HEK293 (cell line): ENCODE measurements at regions of chr20 and their contacts with region 1.

Region 1: DNA sequence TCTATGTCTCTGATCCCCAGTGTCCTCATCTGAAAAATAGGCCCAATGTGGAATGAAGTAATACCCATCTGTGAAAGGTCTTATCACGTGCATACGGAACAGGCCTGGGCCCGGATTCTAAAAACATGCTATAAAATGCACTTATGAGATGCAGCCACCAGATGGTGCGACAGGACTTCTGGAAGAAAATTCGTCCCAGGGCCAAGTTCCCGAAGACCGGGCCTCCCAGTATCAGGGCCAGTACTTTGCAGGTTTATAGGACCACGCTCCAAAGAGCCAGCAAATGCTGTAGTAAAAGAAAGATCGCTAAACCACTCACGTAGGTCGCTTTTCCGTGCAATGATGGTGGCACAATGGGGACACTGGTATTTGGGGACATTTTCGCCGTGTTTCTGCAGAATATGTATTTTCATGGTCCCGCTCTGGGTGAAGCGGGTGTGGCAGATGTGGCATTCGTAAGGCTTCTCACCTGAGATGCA is 10.6 kb downstream of the CTCFL start:
- H3K4me3 ChIP-seq: no peak overlapping the region
- H3K27ac ChIP-seq: no peak overlapping the region
- H3K4me1 ChIP-seq: no peaks in the 10 kb centered on the region
- CTCF ChIP-seq: peak; percentile 55

Region 2: DNA sequence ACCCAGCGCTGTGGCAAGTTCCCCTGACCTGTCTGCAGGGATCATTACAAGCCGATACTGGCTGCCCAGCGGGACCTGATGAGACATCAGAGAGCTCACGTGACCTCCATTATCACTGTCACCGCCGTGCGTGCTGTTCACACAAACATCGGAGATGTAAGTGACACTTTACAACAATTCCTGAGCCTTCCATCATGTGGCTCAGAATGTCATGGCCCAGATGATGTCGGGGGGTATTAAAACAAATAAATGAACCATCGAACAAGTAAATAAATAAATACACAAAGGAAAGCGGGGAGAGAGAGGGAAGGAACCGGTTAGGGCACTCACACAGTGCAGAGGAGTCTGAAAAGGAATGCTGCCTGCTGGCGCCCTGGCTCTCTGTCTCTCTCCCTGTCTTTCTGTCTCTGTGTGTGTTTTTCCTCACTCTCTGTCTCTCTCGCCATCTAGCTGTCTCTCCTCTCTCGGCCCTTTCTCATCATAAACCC is 443.0 kb before region 1 on chr20:
- CTCF ChIA-PET with region 1: no interaction called
- POLR2A ChIA-PET with region 1: no interaction called
- H3K4me3 ChIP-seq: no peak overlapping the region; the same call in 1 of the 2 replicates
- H3K27ac ChIP-seq: no peak overlapping the region
- H3K4me1 ChIP-seq: no peaks in the 10 kb centered on the region
- CTCF ChIP-seq: no peak

Region 3: GRCh38 chr20:57498425-57499400 is 15.6 kb before region 1 on chr20:
- CTCF ChIA-PET with region 1: interaction called, 13 read pairs
- POLR2A ChIA-PET with region 1: no interaction called
- H3K4me3 ChIP-seq: no peak overlapping the region
- H3K27ac ChIP-seq: no peak overlapping the region
- H3K4me1 ChIP-seq: peaks cover 3% of the 10 kb centered on the region; the same call in 1 of the 2 replicates
- CTCF ChIP-seq: peak; percentile 65

Region 4: GRCh38 chr20:57573890-57574289 is 59.6 kb after region 1 on chr20:
- CTCF ChIA-PET with region 1: interaction called, 12 read pairs
- POLR2A ChIA-PET with region 1: no interaction called
- H3K4me3 ChIP-seq: no peak overlapping the region
- H3K27ac ChIP-seq: no peak overlapping the region
- H3K4me1 ChIP-seq: no peaks in the 10 kb centered on the region
- CTCF ChIP-seq: peak; percentile 39

Region 5: GRCh38 chr20:57672159-57672558 is 157.8 kb after region 1 on chr20:
- CTCF ChIA-PET with region 1: no interaction called
- POLR2A ChIA-PET with region 1: no interaction called
- H3K4me3 ChIP-seq: no peak overlapping the region
- H3K27ac ChIP-seq: no peak overlapping the region
- H3K4me1 ChIP-seq: no peaks in the 10 kb centered on the region
- CTCF ChIP-seq: no peak